Posterior vena cava (tissue), 2 donors: ENCODE measurements at regions of chr3 and their contacts with region 1.

Region 1: DNA sequence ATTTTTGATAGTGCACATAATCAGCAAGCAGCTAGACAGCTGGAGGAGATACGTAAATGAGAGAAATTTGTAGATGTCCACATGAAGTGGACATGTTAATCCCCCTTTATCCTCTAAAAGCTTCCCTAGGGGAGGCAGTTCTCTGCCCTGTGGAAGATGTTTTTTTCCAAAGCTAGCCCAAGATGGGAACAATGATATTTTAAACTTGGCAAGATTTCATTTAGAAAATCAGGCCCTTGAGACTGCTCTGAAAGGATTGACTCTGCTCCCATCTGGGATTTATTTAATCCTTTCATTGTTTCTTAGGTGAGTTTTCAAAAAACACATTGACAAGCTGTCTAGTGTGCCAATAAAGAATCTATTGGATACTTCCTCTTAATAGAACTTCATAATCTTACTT is 92.0 kb downstream of the SYNPR start:
- DNase-seq: no peak

Region 2: DNA sequence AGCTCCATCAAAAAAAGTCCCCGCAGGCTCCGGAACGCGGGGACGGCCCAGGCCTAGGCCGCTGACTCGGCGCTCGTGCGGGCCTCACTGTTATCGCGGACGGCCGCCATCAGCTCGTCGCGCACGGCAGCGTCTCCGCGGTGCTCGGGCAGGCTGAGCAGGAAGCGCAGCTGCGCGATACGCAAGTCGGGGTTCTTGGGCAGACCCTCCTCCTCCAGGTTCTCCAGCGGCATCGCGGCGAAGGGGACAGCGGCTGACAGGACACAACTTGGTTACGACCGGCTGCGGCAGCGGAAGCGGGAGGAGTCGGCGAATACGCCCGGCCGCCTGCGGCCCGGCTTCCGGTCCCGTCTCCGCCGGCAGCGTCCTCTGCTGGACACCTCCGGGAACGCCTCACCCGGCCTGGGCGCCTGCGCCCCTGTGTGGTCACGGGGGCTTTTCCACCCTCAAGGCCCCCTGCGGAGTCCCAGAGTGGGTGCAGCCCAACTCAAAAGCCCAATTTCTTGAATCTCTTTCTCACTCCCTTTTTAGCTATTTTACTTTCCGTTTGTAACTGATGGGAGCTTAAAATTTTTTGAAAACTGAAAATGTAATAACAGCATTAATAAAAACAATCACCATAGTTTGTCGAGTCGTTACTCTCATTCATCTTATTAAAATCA is 653.2 kb after region 1 on chr3 and contains the start of gene PSMD6:
- intact Hi-C with region 1: loop called in 1 of 2 experiments (anchors 5 kb)
- DNase-seq: peak; percentile 97
- total RNA-seq, gene PSMD6: 53.3 to 62.7 TPM

Region 3: DNA sequence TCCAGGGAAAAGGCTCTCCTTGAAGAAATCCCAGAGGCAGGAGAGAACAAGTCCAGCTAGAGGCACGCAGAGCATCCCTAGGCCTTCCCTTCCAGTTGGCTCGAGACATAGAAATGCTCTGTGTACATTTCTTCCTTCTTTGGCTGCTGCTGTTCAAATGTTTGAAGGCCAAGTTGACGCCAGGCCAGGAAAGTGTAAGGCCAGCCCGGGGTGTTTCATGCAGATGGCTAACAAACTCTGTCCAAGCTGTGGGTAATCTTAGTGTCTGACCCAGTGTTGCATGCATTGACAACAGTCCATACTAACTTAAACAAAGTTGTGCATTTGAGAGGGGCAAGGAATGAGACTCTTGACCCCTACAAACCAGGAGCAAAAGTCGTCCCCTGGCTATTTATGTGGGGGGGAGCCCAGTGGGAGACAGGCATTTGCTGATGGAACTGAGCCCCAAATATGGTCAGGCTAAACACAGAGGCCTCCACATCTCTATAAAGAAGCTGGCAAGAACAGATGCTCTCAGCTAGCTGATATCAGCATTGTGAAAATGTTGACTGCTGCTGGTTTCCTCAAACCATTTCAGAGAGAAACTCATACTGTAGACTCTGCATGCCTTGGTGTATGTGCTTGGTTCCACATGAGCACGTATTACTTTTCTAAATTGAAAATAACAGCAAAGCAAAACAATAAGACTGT is 1178.3 kb after region 1 on chr3:
- intact Hi-C with region 1: no loop called
- DNase-seq: no peak